IMR-90 (cell line): ENCODE measurements at regions of chrX and their contacts with region 1.

Region 1: DNA sequence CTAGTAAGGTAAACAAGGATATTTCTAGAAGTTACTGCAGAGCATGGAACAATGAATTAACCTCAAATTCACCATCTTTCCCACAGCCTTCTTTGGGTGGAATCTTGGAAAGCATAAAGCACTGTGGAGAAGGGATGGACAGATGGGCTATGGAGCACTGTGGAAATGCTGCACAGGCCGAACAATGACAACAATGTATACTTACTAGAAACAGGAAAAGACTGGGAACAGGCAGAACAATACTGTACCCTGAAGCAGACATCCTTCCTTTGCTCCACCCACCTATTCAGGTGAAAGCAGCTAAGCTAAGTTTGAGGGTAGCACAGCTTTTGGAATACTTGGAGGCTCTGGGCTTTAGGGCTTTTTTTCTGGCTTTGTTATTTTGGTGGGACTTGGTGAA is 250.6 kb upstream of the KLF8 start:
- DNase-seq: no peak
- ATAC-seq: no peak
- H3K4me3 ChIP-seq: no peak overlapping the region
- H3K27ac ChIP-seq: no peak overlapping the region
- H3K4me1 ChIP-seq: no peaks in the 10 kb centered on the region
- H3K27me3 ChIP-seq: no peaks in the 10 kb centered on the region
- CTCF ChIP-seq: no peak
- POLR2A ChIP-seq: no peak
- RAD21 ChIP-seq: no peak

Region 2: GRCh38 chrX:56000174-56000573 is 18.6 kb after region 1 on chrX:
- CTCF ChIA-PET with region 1: no interaction called
- POLR2A ChIA-PET with region 1: no interaction called
- dilution Hi-C with region 1: no loop called
- in situ Hi-C with region 1: no loop called
- intact Hi-C with region 1: loop called (anchors 1 kb)
- DNase-seq: no peak
- ATAC-seq: no peak
- H3K4me3 ChIP-seq: no peak overlapping the region
- H3K27ac ChIP-seq: no peak overlapping the region
- H3K4me1 ChIP-seq: no peaks in the 10 kb centered on the region
- H3K27me3 ChIP-seq: no peaks in the 10 kb centered on the region
- CTCF ChIP-seq: no peak
- POLR2A ChIP-seq: no peak
- RAD21 ChIP-seq: no peak